Motor neuron (in vitro differentiated cells): ENCODE measurements at regions of chr11 and their contacts with region 1.

Region 1: DNA sequence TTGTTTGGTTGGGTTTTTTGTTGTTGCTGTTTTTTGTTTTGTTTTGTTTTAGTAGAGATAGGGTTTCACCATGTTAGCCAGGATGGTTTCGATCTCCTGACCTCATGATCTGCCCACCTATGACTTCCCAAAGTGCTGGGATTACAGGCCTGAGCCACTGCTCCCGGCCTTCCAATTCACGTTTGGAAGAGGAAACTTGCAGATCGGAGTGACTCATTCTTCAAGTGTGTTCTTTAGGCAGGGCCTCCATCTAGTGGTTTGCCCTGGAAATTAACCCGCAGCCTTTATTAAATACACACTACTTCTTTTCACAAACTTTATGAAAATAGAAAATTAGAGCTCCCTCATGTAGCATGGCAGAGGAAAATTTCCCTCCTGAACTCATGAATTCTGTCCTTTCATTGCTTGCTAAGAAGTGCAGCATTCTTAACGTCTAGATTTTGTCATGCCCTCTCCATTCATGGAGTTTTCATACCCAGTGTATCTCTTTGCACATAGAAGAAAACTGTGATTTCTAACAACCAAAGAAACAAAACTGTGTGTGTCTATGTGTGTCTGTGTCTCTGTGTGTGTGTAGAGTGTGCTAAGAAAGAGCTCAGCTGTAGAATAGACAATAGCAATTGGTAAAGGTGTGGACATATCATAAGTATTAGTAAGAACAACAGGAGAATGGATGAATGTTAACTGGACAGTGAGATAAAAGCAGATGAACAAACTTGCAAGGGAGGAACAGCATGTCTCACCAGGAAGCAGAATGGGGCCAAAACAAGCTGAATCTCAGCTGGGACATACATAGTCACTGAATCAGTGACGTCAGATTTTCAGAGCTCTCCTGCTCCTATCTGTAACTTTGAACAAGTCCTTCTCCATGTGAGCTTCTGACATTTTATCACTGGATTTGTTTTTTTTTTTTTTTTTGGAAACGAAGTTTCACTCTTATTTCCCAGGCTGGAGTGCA is 118.4 kb downstream of the BBOX1 start:
- ATAC-seq: peak; percentile 48 to 90 (median 74)
- H3K4me3 ChIP-seq: no peak overlapping the region
- H3K27ac ChIP-seq: no peak overlapping the region
- H3K4me1 ChIP-seq: no peaks in the 10 kb centered on the region

Region 2: DNA sequence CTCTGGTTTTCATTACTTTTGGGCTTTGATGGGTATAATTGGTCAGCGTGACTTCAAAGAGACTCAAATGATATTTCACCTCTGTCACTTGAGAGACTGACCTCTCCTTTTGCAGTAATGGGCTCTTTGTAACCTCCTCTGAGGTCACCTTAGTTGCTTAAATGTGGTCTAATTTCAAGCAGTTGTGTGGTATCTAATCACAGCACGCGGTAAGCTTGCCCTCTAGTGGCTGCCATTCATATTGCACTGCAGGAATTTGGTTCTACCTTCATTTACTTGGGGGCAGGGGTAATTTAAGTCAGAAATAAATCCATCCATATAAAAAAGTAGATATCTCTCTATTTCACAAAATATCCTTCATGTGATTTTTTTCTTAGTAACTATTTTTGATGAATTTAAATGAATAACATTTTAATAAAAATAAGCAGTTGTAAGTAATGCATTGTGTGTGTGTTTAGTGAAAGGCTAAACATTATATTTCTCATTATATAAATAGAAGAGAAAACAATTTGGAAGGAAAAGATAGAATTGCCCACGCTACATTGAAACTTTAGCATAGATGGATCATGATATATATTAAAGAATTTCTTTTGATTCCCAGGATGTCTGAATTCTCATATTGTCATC is 882.1 kb before region 1 on chr11:
- in situ Hi-C with region 1: loop called in 4 of 9 experiments (anchors 25 kb)
- ATAC-seq: peak; percentile 63 to 81 (median 71)
- H3K4me3 ChIP-seq: no peak overlapping the region
- H3K27ac ChIP-seq: no peak overlapping the region
- H3K4me1 ChIP-seq: no peaks in the 10 kb centered on the region

Region 3: DNA sequence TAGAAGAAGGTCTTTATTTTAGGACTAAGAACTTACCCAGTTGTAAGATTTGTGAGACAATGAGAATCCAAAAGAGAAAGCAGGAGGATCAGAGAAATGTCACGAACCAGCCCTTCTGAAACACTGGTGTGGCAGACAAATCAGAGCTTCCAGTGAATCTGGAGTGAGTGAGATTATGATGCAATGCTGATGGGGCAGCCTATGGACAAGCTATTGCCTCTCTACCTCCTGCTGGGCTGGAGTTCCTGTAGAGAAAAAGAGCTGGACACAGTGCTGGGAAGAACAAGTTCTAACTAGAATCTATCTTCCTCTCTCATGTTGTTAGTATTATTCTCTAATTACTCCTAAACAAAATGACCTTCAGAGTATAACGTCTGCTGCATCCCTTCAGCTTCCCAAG is 839.1 kb before region 1 on chr11:
- in situ Hi-C with region 1: loop called in 3 of 9 experiments (anchors 25 kb)
- ATAC-seq: peak in 7 of 8 experiments; percentile 61 to 95 (median 80)
- H3K4me3 ChIP-seq: no peak overlapping the region
- H3K27ac ChIP-seq: peak overlapping the region in 1 of 2 donors; percentile 6
- H3K4me1 ChIP-seq: peaks cover 6% of the 10 kb centered on the region in 2 donors

Region 4: GRCh38 chr11:26753723-26754504 is 405.1 kb before region 1 on chr11:
- in situ Hi-C with region 1: loop called in 7 of 9 experiments (anchors 10 to 25 kb)
- ATAC-seq: peak; percentile 89 to 99 (median 95)
- H3K4me3 ChIP-seq: no peak overlapping the region
- H3K27ac ChIP-seq: no peak overlapping the region
- H3K4me1 ChIP-seq: peaks cover 9 to 23% of the 10 kb centered on the region in 2 donors

Region 5: GRCh38 chr11:26761361-26761809 is 397.6 kb before region 1 on chr11:
- in situ Hi-C with region 1: loop called in 8 of 9 experiments (anchors 10 to 25 kb)
- ATAC-seq: peak in 5 of 8 experiments; percentile 97 to 98 (median 98)
- H3K4me3 ChIP-seq: no peak overlapping the region
- H3K27ac ChIP-seq: no peak overlapping the region
- H3K4me1 ChIP-seq: peaks cover 10 to 30% of the 10 kb centered on the region in 2 donors